ENCODE measurements at regions of chr5 and their contacts with region 1.

Region 1: GRCh38 chr5:54249210-54250028 is 61.0 kb downstream of the ARL15 start:
- DNase-seq: peak; percentile 48
- ATAC-seq: no peak

Region 2: GRCh38 chr5:54310433-54311175 is 61.2 kb after region 1 on chr5 and contains the start of gene ARL15:
- intact Hi-C with region 1: loop called (anchors 5 kb)
- DNase-seq: peak; percentile 99
- ATAC-seq: peak; percentile 97
- total RNA-seq, gene ARL15: 20.3 TPM

Region 3: GRCh38 chr5:54415896-54416601 is 166.6 kb after region 1 on chr5:
- intact Hi-C with region 1: loop called (anchors 5 kb)
- DNase-seq: no peak
- ATAC-seq: no peak

Region 4: GRCh38 chr5:54492178-54492577 is 242.8 kb after region 1 on chr5:
- intact Hi-C with region 1: loop called (anchors 5 kb)
- DNase-seq: no peak
- ATAC-seq: no peak

Measured in Right ventricle myocardium superior (tissue), 1 donor.